Activated CD4-positive, alpha-beta memory T cell treated with anti-CD3 and anti-CD28 coated beads, Interleukin-2, amount 10 ng/mL, durations not matched to agents 7 days and 5 days (primary cell): ENCODE measurements at regions of chr13 and their contacts with region 1.

Region 1: DNA sequence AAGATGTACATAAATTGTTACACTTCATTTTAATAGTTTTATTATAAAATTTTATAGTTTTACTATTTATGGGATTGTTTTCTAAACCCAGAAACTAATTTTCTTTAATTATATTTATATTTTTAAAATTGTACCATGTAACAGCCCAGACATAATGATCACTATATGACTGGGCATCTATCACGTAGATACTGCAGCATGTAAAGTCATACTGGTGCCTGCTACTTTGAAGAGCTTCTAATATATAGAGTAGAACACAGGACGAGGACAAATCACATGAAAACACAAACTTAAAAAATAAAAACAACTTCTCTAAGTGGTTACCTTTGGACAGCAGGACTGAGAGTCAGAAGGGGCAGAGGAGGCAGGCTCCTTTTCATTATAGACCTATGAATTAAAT is 5.3 kb downstream of the ELF1 start:
- DNase-seq: no peak
- H3K4me3 Mint-ChIP-seq: peak overlapping the region; percentile 80
- H3K27ac Mint-ChIP-seq: peak overlapping the region; percentile 62
- H3K4me1 Mint-ChIP-seq: peaks cover 51% of the 10 kb centered on the region
- H3K27me3 Mint-ChIP-seq: no peaks in the 10 kb centered on the region

Region 2: GRCh38 chr13:40974460-40975407 is 39.1 kb before region 1 on chr13:
- CTCF ChIA-PET with region 1: interaction called, 41 read pairs
- POLR2A ChIA-PET with region 1: interaction called, 445 read pairs
- DNase-seq: peak; percentile 36
- H3K4me3 Mint-ChIP-seq: peak overlapping the region; percentile 19
- H3K27ac Mint-ChIP-seq: peak overlapping the region; percentile 47
- H3K4me1 Mint-ChIP-seq: peaks cover 84% of the 10 kb centered on the region
- H3K27me3 Mint-ChIP-seq: no peaks in the 10 kb centered on the region

Region 3: DNA sequence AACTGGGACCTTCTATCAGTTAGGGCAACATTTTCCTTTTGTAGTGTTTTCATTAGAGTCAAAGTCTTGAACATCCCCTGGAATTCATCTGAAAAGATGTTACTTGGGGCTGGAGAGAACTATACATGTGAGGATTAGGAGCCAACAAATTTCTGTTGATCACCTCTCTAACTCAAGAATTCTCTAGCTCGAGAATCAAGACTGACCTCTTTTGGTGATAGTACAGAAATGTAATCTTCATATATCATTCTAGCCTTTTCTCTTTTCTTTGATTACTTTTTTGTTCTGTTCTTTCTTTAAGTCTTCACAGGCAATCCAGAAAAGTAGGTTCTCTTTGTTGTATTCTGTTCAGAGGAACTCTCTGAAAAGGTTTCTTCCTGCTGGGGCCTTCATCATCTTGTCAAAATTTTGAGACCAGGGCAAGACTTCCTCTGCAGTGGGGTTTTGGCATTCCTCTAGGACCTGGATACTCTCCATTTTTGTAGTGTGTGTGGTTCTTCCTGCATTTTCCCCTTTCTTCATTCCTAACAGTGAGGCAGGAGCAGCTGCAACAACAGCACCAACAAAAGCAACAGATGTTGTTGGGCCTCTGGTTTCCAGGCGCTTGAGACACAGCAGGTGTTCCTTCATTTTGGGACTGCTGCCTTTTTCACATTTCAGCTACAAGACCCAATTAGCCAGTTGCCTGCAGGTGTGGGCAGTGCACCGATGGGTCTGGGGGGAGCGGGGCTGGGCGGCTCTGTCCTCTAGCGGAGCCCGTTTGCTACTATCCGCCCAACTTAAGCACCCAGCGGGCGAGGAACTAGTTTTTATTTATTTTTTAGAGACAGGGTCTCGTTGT is 20.9 kb before region 1 on chr13:
- CTCF ChIA-PET with region 1: interaction called, 7 read pairs
- POLR2A ChIA-PET with region 1: interaction called, 128 read pairs
- DNase-seq: no peak
- H3K4me3 Mint-ChIP-seq: no peak overlapping the region
- H3K27ac Mint-ChIP-seq: peak overlapping the region; percentile 61
- H3K4me1 Mint-ChIP-seq: peaks cover 79% of the 10 kb centered on the region
- H3K27me3 Mint-ChIP-seq: no peaks in the 10 kb centered on the region